Heart right ventricle (tissue), 16 donors: ENCODE measurements at regions of chr11 and their contacts with region 1.

Region 1: GRCh38 chr11:120523196-120523595 is 11.6 kb downstream of the GRIK4 start:
- DNase-seq: no peak
- ATAC-seq: no peak
- H3K4me3 ChIP-seq: no peak overlapping the region
- H3K27ac ChIP-seq: no peak overlapping the region
- H3K4me1 ChIP-seq: peaks cover 0 to 6% (median 0%) of the 10 kb centered on the region in 9 donors
- H3K27me3 ChIP-seq: peaks cover 0 to 58% (median 45%) of the 10 kb centered on the region in 7 donors
- CTCF ChIP-seq: no peak

Region 2: GRCh38 chr11:120675171-120675570 is 152.0 kb after region 1 on chr11:
- intact Hi-C with region 1: loop called in 1 of 10 experiments (anchors 5 kb)
- DNase-seq: no peak
- ATAC-seq: no peak
- H3K4me3 ChIP-seq: no peak overlapping the region
- H3K27ac ChIP-seq: no peak overlapping the region
- H3K4me1 ChIP-seq: no peaks in the 10 kb centered on the region
- H3K27me3 ChIP-seq: peaks cover 0 to 73% (median 18%) of the 10 kb centered on the region in 7 donors
- CTCF ChIP-seq: no peak